ENCODE measurements at regions of chr7 and their contacts with region 1.

Region 1: GRCh38 chr7:156943091-156944041 is 6.1 kb upstream of the NOM1 start:
- DNase-seq: peak in 1 of 10 donors; percentile 12
- H3K4me3 ChIP-seq: no peak overlapping the region
- H3K27ac ChIP-seq: no peak overlapping the region
- H3K27me3 ChIP-seq: peaks cover 0 to 19% (median 3%) of the 10 kb centered on the region in 45 donors
- CTCF ChIP-seq: no peak

Region 2: DNA sequence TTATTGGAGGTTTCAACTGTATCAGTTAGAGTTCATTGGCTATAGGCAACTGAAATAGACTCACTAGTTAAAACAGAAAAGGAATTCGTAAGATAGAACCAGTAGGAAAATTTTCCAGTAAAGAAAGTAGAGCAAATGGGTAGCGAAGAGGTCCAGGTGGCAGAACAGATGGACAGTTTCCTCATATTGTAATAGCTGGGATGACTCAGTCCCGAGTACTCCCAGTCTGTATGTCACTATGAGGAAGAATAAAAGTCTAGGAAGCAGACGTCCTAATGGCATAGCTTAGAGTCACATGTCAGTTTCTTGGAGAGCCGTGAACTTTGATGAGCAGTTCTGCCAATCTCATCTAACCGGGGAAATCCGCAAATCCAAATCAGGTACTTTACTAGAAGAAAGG is 207.5 kb before region 1 on chr7:
- intact Hi-C with region 1: no loop called
- DNase-seq: peak in 1 of 10 donors; percentile 44
- H3K4me3 ChIP-seq: no peak overlapping the region
- H3K27ac ChIP-seq: no peak overlapping the region
- H3K27me3 ChIP-seq: no peaks in the 10 kb centered on the region
- CTCF ChIP-seq: no peak

Region 3: GRCh38 chr7:156903232-156903909 is 40.0 kb before region 1 on chr7:
- intact Hi-C with region 1: loop called in 1 of 2 experiments (anchors 5 kb)
- DNase-seq: no peak
- H3K4me3 ChIP-seq: no peak overlapping the region
- H3K27ac ChIP-seq: peak overlapping the region in 11 of 59 donors; percentile 14 to 71 (median 23)
- H3K27me3 ChIP-seq: no peaks in the 10 kb centered on the region
- CTCF ChIP-seq: no peak

Region 4: GRCh38 chr7:157386979-157387800 is 443.8 kb after region 1 on chr7:
- intact Hi-C with region 1: no loop called
- DNase-seq: peak; percentile 46 to 91 (median 76)
- H3K4me3 ChIP-seq: peak overlapping the region in 2 of 59 donors; percentile 13 to 16
- H3K27ac ChIP-seq: peak overlapping the region in 20 of 59 donors; percentile 1 to 68 (median 30)
- H3K27me3 ChIP-seq: no peaks in the 10 kb centered on the region
- CTCF ChIP-seq: peak; percentile 67 to 94 (median 87)

Measured in dorsolateral prefrontal cortex (tissue), 120 donors.